GM12878 (cell line): ENCODE measurements at regions of chr7 and their contacts with region 1.

Region 1: GRCh38 chr7:30740424-30741181 is 11.3 kb upstream of the INMT start:
- DNase-seq: no peak
- ATAC-seq: peak; percentile 90
- H3K4me3 ChIP-seq: no peak overlapping the region
- H3K27ac ChIP-seq: no peak overlapping the region
- H3K4me1 ChIP-seq: no peaks in the 10 kb centered on the region
- H3K27me3 ChIP-seq: no peaks in the 10 kb centered on the region; a peak in 2 of 4 replicates
- CTCF ChIP-seq: peak; percentile 96 to 99 (median 98); a peak in 5 of 6 replicates
- EP300 ChIP-seq: no peak
- POLR2A ChIP-seq: no peak
- RAD21 ChIP-seq: peak; percentile 94

Region 2: GRCh38 chr7:30268586-30268985 is 472.0 kb before region 1 on chr7:
- CTCF ChIA-PET with region 1: no interaction called
- POLR2A ChIA-PET with region 1: no interaction called
- RAD21 ChIA-PET with region 1: no interaction called
- SMC1A ChIA-PET with region 1: no interaction called
- in situ Hi-C with region 1: loop called (anchors 10 kb)
- intact Hi-C with region 1: no loop called
- DNase-seq: no peak
- ATAC-seq: no peak
- H3K4me3 ChIP-seq: no peak overlapping the region
- H3K27ac ChIP-seq: no peak overlapping the region
- H3K4me1 ChIP-seq: no peaks in the 10 kb centered on the region
- H3K27me3 ChIP-seq: no peaks in the 10 kb centered on the region
- CTCF ChIP-seq: no peak
- EP300 ChIP-seq: no peak
- POLR2A ChIP-seq: no peak
- RAD21 ChIP-seq: no peak

Region 3: GRCh38 chr7:30510124-30511075 is 230.2 kb before region 1 on chr7:
- CTCF ChIA-PET with region 1: interaction called, 22 read pairs
- POLR2A ChIA-PET with region 1: no interaction called
- RAD21 ChIA-PET with region 1: no interaction called
- SMC1A ChIA-PET with region 1: interaction called, 6 read pairs
- in situ Hi-C with region 1: no loop called
- intact Hi-C with region 1: loop called (anchors 2 kb)
- DNase-seq: no peak
- ATAC-seq: peak; percentile 85
- H3K4me3 ChIP-seq: no peak overlapping the region
- H3K27ac ChIP-seq: no peak overlapping the region
- H3K4me1 ChIP-seq: no peaks in the 10 kb centered on the region
- H3K27me3 ChIP-seq: no peaks in the 10 kb centered on the region
- CTCF ChIP-seq: peak; percentile 67 to 85 (median 82)
- EP300 ChIP-seq: no peak
- POLR2A ChIP-seq: no peak
- RAD21 ChIP-seq: peak; percentile 75

Region 4: GRCh38 chr7:30548762-30549344 is 191.8 kb before region 1 on chr7:
- CTCF ChIA-PET with region 1: interaction called, 38 read pairs
- POLR2A ChIA-PET with region 1: no interaction called
- RAD21 ChIA-PET with region 1: no interaction called
- SMC1A ChIA-PET with region 1: interaction called, 12 read pairs
- in situ Hi-C with region 1: no loop called
- intact Hi-C with region 1: loop called (anchors 2 kb)
- DNase-seq: no peak
- ATAC-seq: peak; percentile 82
- H3K4me3 ChIP-seq: no peak overlapping the region
- H3K27ac ChIP-seq: no peak overlapping the region
- H3K4me1 ChIP-seq: peaks cover 4% of the 10 kb centered on the region; the same call in 1 of the 2 replicates
- H3K27me3 ChIP-seq: no peaks in the 10 kb centered on the region
- CTCF ChIP-seq: peak; percentile 69 to 81 (median 76)
- EP300 ChIP-seq: no peak
- POLR2A ChIP-seq: no peak
- RAD21 ChIP-seq: peak; percentile 50

Region 5: GRCh38 chr7:30702200-30702599 is 38.4 kb before region 1 on chr7:
- CTCF ChIA-PET with region 1: interaction called, 10 read pairs
- POLR2A ChIA-PET with region 1: no interaction called
- RAD21 ChIA-PET with region 1: no interaction called
- SMC1A ChIA-PET with region 1: no interaction called
- in situ Hi-C with region 1: no loop called
- intact Hi-C with region 1: no loop called
- DNase-seq: no peak
- ATAC-seq: peak; percentile 43; the same call in 1 of the 3 replicates
- H3K4me3 ChIP-seq: no peak overlapping the region
- H3K27ac ChIP-seq: no peak overlapping the region
- H3K4me1 ChIP-seq: no peaks in the 10 kb centered on the region
- H3K27me3 ChIP-seq: peaks cover 0 to 3% of the 10 kb centered on the region in 2 experiments; a peak in 2 of 4 replicates
- CTCF ChIP-seq: peak in 2 of 3 experiments; percentile 15 to 26; a peak in 2 of 6 replicates
- EP300 ChIP-seq: no peak
- POLR2A ChIP-seq: no peak
- RAD21 ChIP-seq: no peak